CD8-positive, alpha-beta T cell (primary cell): ENCODE measurements at regions of chr1 and their contacts with region 1.

Region 1: GRCh38 chr1:155167166-155168104 is 5.7 kb downstream of the KRTCAP2 start:
- DNase-seq: peak; percentile 69 to 91 (median 86)
- ATAC-seq: peak; percentile 80
- H3K4me3 ChIP-seq: peak overlapping the region in 1 of 2 experiments; percentile 28
- H3K4me3 Mint-ChIP-seq: peak overlapping the region; percentile 60
- H3K27ac ChIP-seq: no peak overlapping the region
- H3K27ac Mint-ChIP-seq: no peak overlapping the region
- H3K4me1 ChIP-seq: peaks cover 19% of the 10 kb centered on the region
- H3K4me1 Mint-ChIP-seq: peaks cover 22% of the 10 kb centered on the region
- H3K27me3 ChIP-seq: no peaks in the 10 kb centered on the region
- H3K27me3 Mint-ChIP-seq: no peaks in the 10 kb centered on the region
- CTCF ChIP-seq: peak; percentile 64

Region 2: DNA sequence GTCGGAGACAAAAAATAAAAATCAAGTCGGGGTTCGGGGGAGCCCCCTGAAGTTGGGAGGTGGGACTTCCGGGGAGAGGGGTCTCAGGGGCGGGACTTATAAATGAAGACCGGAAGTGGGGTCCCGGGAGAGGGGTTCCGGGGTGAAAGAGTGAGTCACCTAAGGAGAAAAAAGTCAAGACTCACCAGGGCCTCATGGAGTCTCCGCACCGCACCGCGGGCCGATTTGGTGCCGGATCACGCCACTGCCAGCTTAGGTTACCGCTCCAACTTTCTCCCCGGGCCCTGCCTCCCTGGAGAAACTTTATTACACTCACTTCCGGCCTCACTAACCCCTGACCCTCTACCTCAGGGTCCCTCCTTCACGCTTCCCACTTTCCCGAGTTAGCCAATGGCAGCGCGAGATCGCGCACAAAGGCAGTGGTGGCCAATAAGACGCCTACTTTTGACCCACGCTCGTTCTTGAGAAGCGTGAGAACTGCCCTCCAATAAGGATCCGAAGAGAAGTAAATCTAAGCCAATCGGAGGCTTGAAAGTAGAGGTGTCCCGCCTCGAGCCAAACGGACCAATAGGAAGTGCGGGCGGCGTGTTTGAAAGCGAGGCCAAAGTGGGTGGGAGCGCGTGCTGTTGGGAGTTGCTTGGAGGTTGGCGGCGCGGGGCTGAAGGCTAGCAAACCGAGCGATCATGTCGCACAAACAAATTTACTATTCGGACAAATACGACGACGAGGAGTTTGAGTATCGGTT is 193.2 kb before region 1 on chr1 and contains the start of gene CKS1B:
- CTCF ChIA-PET with region 1: no interaction called
- POLR2A ChIA-PET with region 1: no interaction called
- intact Hi-C with region 1: no loop called
- DNase-seq: peak; percentile 92 to 99 (median 97)
- ATAC-seq: peak; percentile 86
- H3K4me3 ChIP-seq: peak within 1 kb of the TSS; percentile 67
- H3K4me3 Mint-ChIP-seq: no peak within 1 kb of the TSS
- H3K27ac ChIP-seq: peak within 1 kb of the TSS; percentile 90 to 95
- H3K27ac Mint-ChIP-seq: no peak within 1 kb of the TSS
- H3K4me1 ChIP-seq: peaks cover 23% of the 10 kb centered on the region
- H3K4me1 Mint-ChIP-seq: peaks cover 26% of the 10 kb centered on the region
- H3K27me3 ChIP-seq: no peaks in the 10 kb centered on the region
- H3K27me3 Mint-ChIP-seq: no peaks in the 10 kb centered on the region
- CTCF ChIP-seq: no peak
- total RNA-seq, gene CKS1B: 2.3 to 2.9 TPM

Region 3: GRCh38 chr1:155044812-155045690 is 122.4 kb before region 1 on chr1:
- CTCF ChIA-PET with region 1: interaction called, 11 read pairs
- POLR2A ChIA-PET with region 1: interaction called, 5 read pairs
- intact Hi-C with region 1: loop called in 1 of 2 experiments (anchors 5 kb)
- DNase-seq: peak in 8 of 9 experiments; percentile 42 to 80 (median 64)
- ATAC-seq: peak; percentile 94
- H3K4me3 ChIP-seq: no peak overlapping the region
- H3K4me3 Mint-ChIP-seq: no peak overlapping the region
- H3K27ac ChIP-seq: no peak overlapping the region
- H3K27ac Mint-ChIP-seq: no peak overlapping the region
- H3K4me1 ChIP-seq: no peaks in the 10 kb centered on the region
- H3K4me1 Mint-ChIP-seq: peaks cover 4% of the 10 kb centered on the region
- H3K27me3 ChIP-seq: no peaks in the 10 kb centered on the region
- H3K27me3 Mint-ChIP-seq: peaks cover 3% of the 10 kb centered on the region
- CTCF ChIP-seq: peak; percentile 64

Region 4: GRCh38 chr1:155099331-155099730 is 68.1 kb before region 1 on chr1:
- CTCF ChIA-PET with region 1: interaction called, 32 read pairs
- POLR2A ChIA-PET with region 1: interaction called, 3 read pairs
- intact Hi-C with region 1: no loop called
- DNase-seq: no peak
- ATAC-seq: no peak
- H3K4me3 ChIP-seq: no peak overlapping the region
- H3K4me3 Mint-ChIP-seq: no peak overlapping the region
- H3K27ac ChIP-seq: no peak overlapping the region
- H3K27ac Mint-ChIP-seq: no peak overlapping the region
- H3K4me1 ChIP-seq: no peaks in the 10 kb centered on the region
- H3K4me1 Mint-ChIP-seq: no peaks in the 10 kb centered on the region
- H3K27me3 ChIP-seq: no peaks in the 10 kb centered on the region
- H3K27me3 Mint-ChIP-seq: peaks cover 5% of the 10 kb centered on the region
- CTCF ChIP-seq: no peak

Region 5: DNA sequence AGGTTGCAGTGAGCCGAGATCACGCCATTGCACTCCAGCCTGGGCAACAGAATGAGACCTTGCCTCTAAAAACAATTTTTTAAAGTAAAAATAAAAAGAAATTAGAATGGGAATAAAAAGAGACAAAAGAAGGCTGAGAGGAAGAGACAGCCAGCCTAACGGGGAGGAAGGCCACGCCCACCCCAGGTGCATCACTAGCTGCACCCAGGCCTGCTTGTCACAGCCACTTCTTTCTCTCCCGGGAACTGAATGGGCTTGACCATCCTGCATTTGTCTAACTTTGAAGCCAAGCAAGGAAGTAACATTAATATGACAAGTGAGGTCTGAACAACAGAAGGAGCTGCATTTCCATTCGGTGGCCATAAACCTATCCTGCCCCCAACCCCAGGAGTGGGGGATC is 60.6 kb before region 1 on chr1:
- CTCF ChIA-PET with region 1: interaction called, 17 read pairs
- POLR2A ChIA-PET with region 1: no interaction called
- intact Hi-C with region 1: loop called (anchors 1 kb)
- DNase-seq: no peak
- ATAC-seq: no peak
- H3K4me3 ChIP-seq: no peak overlapping the region
- H3K4me3 Mint-ChIP-seq: no peak overlapping the region
- H3K27ac ChIP-seq: no peak overlapping the region
- H3K27ac Mint-ChIP-seq: no peak overlapping the region
- H3K4me1 ChIP-seq: no peaks in the 10 kb centered on the region
- H3K4me1 Mint-ChIP-seq: no peaks in the 10 kb centered on the region
- H3K27me3 ChIP-seq: no peaks in the 10 kb centered on the region
- H3K27me3 Mint-ChIP-seq: peaks cover 7% of the 10 kb centered on the region
- CTCF ChIP-seq: no peak

Region 6: GRCh38 chr1:155117617-155118016 is 49.8 kb before region 1 on chr1:
- CTCF ChIA-PET with region 1: interaction called, 17 read pairs
- POLR2A ChIA-PET with region 1: no interaction called
- intact Hi-C with region 1: loop called (anchors 1 kb)
- DNase-seq: no peak
- ATAC-seq: no peak
- H3K4me3 ChIP-seq: no peak overlapping the region
- H3K4me3 Mint-ChIP-seq: no peak overlapping the region
- H3K27ac ChIP-seq: no peak overlapping the region
- H3K27ac Mint-ChIP-seq: no peak overlapping the region
- H3K4me1 ChIP-seq: no peaks in the 10 kb centered on the region
- H3K4me1 Mint-ChIP-seq: no peaks in the 10 kb centered on the region
- H3K27me3 ChIP-seq: peaks cover 0 to 2% of the 10 kb centered on the region in 2 experiments
- H3K27me3 Mint-ChIP-seq: peaks cover 3% of the 10 kb centered on the region
- CTCF ChIP-seq: no peak

Region 7: DNA sequence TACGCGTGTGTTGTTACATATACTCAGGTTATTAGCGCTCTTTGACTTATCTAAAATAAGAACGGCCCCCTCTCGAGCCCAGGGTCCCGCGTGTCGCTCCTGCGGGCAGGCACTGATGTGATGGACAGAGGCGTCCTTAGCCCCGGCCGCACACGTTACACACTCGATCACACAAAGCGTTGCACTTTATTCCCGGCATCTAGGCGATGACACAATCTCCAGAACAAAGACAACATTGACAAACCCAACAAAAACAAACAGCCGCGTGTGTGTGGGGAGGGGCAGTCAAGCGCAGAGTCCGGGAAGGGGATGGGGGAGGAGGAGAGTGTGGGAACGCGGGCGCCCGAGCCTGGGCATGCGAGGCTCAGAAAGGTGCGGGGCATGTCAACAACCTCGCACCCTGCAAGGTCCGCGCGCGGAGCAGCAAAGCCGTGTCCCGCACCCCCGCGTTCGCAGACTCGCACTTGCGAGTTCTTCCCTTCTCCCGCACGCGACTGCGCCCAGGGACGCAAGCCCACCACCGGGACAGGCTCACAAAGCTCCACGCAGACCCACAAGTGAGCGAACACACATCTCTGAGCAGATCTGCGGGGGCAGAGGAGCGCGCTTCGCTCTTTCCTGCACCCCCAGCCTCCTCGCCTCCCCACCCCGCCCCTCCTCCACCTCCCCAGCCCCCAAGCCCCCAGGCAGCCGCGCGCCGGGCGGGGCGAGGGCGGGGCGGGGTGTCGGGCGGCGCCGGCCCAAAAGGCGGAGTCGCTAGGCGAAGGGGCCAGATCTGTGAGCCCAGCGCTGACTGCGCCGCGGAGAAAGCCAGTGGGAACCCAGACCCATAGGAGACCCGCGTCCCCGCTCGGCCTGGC is 40.1 kb before region 1 on chr1 and contains the start of gene EFNA1:
- CTCF ChIA-PET with region 1: interaction called, 19 read pairs
- POLR2A ChIA-PET with region 1: no interaction called
- intact Hi-C with region 1: no loop called
- DNase-seq: peak in 7 of 9 experiments; percentile 36 to 64 (median 48)
- ATAC-seq: peak; percentile 47
- H3K4me3 ChIP-seq: peak within 1 kb of the TSS; percentile 53 to 59
- H3K4me3 Mint-ChIP-seq: peak within 1 kb of the TSS; percentile 86
- H3K27ac ChIP-seq: no peak within 1 kb of the TSS
- H3K27ac Mint-ChIP-seq: peak within 1 kb of the TSS; percentile 87
- H3K4me1 ChIP-seq: peaks cover 36% of the 10 kb centered on the region
- H3K4me1 Mint-ChIP-seq: peaks cover 45% of the 10 kb centered on the region
- H3K27me3 ChIP-seq: peaks cover 0 to 2% of the 10 kb centered on the region in 2 experiments
- H3K27me3 Mint-ChIP-seq: no peaks in the 10 kb centered on the region
- CTCF ChIP-seq: no peak
- total RNA-seq, gene EFNA1: 7.3 to 10.4 TPM

Region 8: GRCh38 chr1:155145491-155145890 is 21.9 kb before region 1 on chr1:
- CTCF ChIA-PET with region 1: interaction called, 11 read pairs
- POLR2A ChIA-PET with region 1: no interaction called
- intact Hi-C with region 1: no loop called
- DNase-seq: no peak
- ATAC-seq: no peak
- H3K4me3 ChIP-seq: no peak overlapping the region
- H3K4me3 Mint-ChIP-seq: no peak overlapping the region
- H3K27ac ChIP-seq: no peak overlapping the region
- H3K27ac Mint-ChIP-seq: no peak overlapping the region
- H3K4me1 ChIP-seq: no peaks in the 10 kb centered on the region
- H3K4me1 Mint-ChIP-seq: peaks cover 2% of the 10 kb centered on the region
- H3K27me3 ChIP-seq: no peaks in the 10 kb centered on the region
- H3K27me3 Mint-ChIP-seq: peaks cover 25% of the 10 kb centered on the region
- CTCF ChIP-seq: no peak